ENCODE measurements at regions of chr17 and their contacts with region 1.

Region 1: DNA sequence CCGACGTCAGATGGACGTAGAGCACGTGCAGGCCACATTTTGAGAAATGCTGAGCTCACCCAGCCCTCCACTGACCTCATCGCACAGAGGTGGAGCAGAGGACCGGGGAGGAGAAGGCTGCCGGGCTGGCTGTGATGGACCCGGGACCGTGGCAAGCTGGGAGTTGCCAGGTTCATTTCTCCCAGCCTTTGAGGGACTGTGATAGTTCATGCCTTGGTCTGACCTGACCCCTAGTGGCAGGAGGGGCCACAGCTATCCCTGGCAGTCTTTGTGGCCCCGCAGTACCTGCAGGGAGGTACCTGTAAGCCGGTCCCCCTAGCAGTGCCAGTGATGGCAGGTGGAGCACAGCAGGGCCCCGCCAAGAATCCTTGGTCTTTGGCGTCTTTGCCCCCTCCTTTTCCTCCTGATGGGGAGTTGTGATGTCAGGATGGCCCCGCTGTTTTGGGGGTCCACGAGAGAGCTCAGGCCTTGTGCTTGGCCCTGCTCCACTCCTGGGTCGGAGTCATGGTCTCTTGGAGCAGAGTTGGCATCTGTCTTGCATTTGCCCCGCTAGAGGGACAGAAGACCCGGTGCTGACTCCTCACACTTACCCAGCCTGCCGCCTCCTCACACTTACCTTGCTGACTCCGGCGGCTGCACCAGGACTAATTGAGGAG is 50.4 kb downstream of the OR1D5 start:
- DNase-seq: peak; percentile 59
- ATAC-seq: peak; percentile 79
- H3K4me3 Mint-ChIP-seq: no peak overlapping the region
- H3K27ac Mint-ChIP-seq: no peak overlapping the region
- H3K4me1 Mint-ChIP-seq: no peaks in the 10 kb centered on the region
- H3K27me3 Mint-ChIP-seq: no peaks in the 10 kb centered on the region

Region 2: GRCh38 chr17:2786176-2786881 is 226.7 kb before region 1 on chr17:
- CTCF ChIA-PET with region 1: interaction called, 10 read pairs
- POLR2A ChIA-PET with region 1: no interaction called
- DNase-seq: peak; percentile 91
- ATAC-seq: peak; percentile 98
- H3K4me3 Mint-ChIP-seq: no peak overlapping the region
- H3K27ac Mint-ChIP-seq: no peak overlapping the region
- H3K4me1 Mint-ChIP-seq: peaks cover 20% of the 10 kb centered on the region
- H3K27me3 Mint-ChIP-seq: peaks cover 27% of the 10 kb centered on the region

Region 3: DNA sequence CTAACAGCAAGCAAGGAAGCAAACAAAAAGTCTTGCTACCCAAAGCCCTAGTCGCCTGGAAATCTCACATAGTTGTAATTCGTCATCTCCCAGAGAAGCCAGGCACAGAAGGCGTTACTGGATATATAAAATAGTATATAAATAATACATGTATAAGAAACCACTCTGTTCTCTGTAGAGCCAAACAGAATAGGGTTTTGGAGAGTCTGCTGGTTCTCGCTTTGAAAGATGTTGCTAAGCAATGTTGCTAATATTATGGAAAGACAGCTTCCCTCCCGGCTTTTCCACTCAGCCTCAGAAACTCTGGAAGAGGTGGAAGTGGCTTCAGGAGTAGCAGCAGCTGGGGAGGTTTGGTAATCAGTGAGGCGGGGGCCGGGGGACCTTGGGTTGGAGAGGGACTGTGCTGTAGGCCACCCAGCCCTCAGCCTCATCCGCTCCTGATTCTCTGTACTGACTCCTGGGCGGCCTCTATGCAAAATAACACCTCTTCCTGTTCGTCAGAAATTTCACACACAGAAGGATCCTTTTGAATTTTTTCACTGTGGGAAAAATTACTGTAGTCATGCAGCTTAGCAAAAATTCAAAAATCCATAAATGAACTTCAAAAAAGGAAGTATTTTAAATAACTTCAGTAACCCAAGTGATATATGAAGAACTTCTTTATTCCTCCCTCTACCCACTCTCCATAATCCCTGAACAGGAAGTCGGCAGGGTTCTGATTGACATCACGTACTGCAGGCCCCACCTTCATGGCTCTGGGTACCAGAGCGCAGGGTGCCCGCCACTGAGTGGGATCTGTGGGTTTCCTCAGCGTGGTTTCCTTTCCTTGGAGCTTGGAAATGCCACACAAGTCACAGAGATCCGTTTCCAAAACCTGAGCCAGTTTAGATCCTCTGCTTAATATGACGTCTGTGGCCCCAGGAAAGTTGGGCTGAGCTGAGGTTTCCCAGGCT is 165.4 kb before region 1 on chr17:
- CTCF ChIA-PET with region 1: interaction called, 22 read pairs
- POLR2A ChIA-PET with region 1: no interaction called
- DNase-seq: no peak
- ATAC-seq: no peak
- H3K4me3 Mint-ChIP-seq: no peak overlapping the region
- H3K27ac Mint-ChIP-seq: no peak overlapping the region
- H3K4me1 Mint-ChIP-seq: peaks cover 15% of the 10 kb centered on the region
- H3K27me3 Mint-ChIP-seq: peaks cover 18% of the 10 kb centered on the region

Measured in activated CD8-positive, alpha-beta T cell treated with anti-CD3 and anti-CD28 coated beads, Interleukin-2, amount 10 ng/mL, durations not matched to agents 7 days and 5 days (primary cell).